Ascending aorta (tissue), 2 donors: ENCODE measurements at regions of chr5 and their contacts with region 1.

Region 1: GRCh38 chr5:131796793-131797693 is at the start of gene FNIP1:
- DNase-seq: peak; percentile 99 to 100
- H3K4me3 ChIP-seq: peak within 1 kb of the TSS; percentile 73 to 98
- H3K27ac ChIP-seq: peak within 1 kb of the TSS; percentile 95 to 99
- H3K4me1 ChIP-seq: peaks cover 0 to 18% of the 10 kb centered on the region in 2 donors
- H3K27me3 ChIP-seq: no peaks in the 10 kb centered on the region
- CTCF ChIP-seq: no peak
- total RNA-seq, gene FNIP1: 20.5 TPM

Region 2: DNA sequence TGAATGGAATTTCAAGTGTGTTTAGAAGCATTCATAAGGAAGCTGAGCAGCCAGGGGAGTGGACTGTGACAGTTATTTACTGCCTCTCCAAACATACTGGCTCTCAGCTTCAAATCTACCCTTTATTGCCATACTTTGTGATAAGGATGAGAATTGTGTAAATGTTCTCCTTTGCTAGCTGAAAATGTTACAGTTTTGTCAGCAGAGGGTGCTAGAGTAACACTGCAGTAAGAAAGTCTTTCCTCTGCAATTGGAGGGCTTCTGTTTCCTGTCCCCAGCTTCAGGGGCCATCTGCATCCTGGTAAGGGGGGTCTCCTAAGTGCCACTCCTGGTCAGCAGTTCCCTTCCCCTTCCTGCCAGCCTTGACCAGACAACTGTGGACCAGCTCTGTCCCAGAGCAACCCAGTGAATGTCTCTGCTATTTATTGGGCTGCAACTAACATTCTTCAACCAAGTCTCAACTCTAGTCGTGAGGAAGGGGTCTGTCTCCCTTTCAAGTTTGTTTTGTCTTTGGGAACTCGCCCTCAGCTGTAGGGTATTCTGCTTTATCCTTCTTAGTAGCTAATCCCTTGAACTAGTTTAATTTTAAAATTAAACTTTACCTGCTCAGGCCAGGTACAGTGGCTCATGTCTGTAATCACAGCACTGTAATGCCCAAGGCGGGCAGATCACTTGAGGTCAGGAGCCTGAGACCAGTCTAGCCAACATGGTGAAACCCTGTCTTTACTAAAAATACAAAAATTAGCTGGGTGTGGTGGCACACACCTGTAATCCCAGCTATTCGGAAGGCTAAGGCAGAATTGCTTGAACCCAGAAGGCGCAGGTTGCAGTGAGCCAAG is 207.3 kb before region 1 on chr5:
- intact Hi-C with region 1: loop called (anchors 5 kb)
- DNase-seq: no peak
- H3K4me3 ChIP-seq: no peak overlapping the region
- H3K27ac ChIP-seq: no peak overlapping the region
- H3K4me1 ChIP-seq: no peaks in the 10 kb centered on the region
- H3K27me3 ChIP-seq: no peaks in the 10 kb centered on the region
- CTCF ChIP-seq: peak; percentile 72 to 95 (median 82)

Region 3: DNA sequence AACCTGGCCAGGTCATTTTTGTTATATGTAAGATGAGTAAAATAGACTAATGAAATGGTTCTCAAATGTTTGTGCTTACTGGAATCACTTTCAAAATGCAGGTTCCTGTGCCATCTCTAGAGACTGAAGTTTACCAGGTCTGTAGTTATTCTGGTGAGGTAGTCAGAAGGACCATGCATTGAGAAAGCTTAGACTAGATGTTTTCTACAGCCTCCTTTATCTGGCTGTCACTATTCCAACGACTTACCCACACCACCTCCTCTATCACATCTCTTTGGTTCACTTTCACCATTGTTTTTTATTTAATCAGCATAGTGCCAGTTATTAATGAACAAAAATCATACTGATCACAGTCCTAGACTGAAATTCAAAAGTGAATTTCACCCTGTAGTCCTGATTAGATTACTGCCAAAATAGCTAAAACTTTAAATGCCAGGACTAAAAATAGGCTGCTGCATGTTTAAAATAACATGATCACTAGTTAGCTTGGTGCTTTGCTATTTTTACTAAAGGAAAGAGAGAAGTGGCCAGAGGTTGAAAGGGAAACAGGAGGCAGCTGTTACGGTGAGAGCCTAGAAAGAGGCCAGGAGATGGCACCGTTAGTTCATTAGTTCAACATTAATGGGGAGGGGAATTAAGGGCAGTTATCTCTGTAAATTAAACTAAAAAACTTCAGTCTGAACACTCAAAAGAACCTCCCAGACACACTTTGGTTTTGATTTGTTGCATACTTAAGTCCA is 13.6 kb after region 1 on chr5:
- intact Hi-C with region 1: loop called (anchors 2 kb)
- DNase-seq: no peak
- H3K4me3 ChIP-seq: peak overlapping the region; percentile 4 to 15
- H3K27ac ChIP-seq: peak overlapping the region; percentile 50 to 61
- H3K4me1 ChIP-seq: peaks cover 3 to 4% of the 10 kb centered on the region in 2 donors
- H3K27me3 ChIP-seq: no peaks in the 10 kb centered on the region
- CTCF ChIP-seq: peak in 2 of 3 experiments; percentile 15 to 37

Region 4: GRCh38 chr5:132001647-132002561 is 204.9 kb after region 1 on chr5:
- intact Hi-C with region 1: no loop called
- DNase-seq: no peak
- H3K4me3 ChIP-seq: no peak overlapping the region
- H3K27ac ChIP-seq: no peak overlapping the region
- H3K4me1 ChIP-seq: peaks cover 0 to 4% of the 10 kb centered on the region in 2 donors
- H3K27me3 ChIP-seq: no peaks in the 10 kb centered on the region
- CTCF ChIP-seq: no peak